ENCODE measurements at regions of chr5 and their contacts with region 1.

Region 1: DNA sequence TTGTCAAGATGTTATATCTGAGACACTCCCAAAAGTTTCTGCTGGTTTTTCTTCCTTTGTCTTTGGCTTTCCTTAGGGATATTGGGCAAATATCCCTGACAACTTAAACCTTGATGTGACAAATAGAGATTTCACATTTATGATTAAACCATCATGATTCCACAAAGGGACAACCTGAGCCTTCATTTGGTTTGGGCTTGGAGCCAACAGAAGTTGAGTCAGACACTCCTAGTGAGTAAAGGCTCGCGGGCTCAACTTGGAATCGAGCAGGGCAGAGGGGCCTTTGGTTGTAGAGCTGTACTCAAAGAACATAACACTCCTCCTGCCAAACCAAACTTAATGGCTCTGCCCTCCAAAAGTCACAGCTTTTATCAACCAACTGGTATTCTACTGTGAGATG is 290.3 kb upstream of the MAP3K1 start:
- DNase-seq: peak; percentile 81
- H3K4me3 ChIP-seq: no peak overlapping the region
- H3K27ac ChIP-seq: no peak overlapping the region
- H3K4me1 ChIP-seq: peaks cover 43% of the 10 kb centered on the region
- H3K27me3 ChIP-seq: no peaks in the 10 kb centered on the region
- CTCF ChIP-seq: no peak

Region 2: DNA sequence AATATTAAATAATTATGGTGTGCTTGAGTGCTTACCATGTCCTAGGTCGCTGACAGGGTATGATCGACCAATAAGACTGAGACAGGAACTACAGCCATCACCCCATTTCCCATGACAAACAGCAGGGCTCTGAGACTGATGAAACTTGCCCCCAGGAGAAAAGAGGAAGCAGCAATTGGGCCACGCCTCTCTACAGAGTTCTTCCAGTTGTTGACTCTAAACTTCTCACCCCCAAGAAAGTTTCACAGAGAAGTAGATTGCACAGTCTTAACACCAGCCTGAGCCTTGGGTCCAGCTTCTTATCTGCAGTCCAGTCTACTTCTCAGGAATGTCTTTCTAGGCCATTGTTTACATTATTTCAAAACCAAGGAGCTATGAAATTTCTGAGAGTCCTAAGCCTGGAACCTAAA is 109.7 kb before region 1 on chr5:
- CTCF ChIA-PET with region 1: no interaction called
- dilution Hi-C with region 1: no loop called
- in situ Hi-C with region 1: no loop called
- intact Hi-C with region 1: no loop called
- DNase-seq: no peak
- H3K4me3 ChIP-seq: no peak overlapping the region
- H3K27ac ChIP-seq: no peak overlapping the region
- H3K4me1 ChIP-seq: peaks cover 5% of the 10 kb centered on the region
- H3K27me3 ChIP-seq: no peaks in the 10 kb centered on the region
- CTCF ChIP-seq: no peak

Region 3: GRCh38 chr5:56543441-56544390 is 18.6 kb after region 1 on chr5:
- CTCF ChIA-PET with region 1: no interaction called
- dilution Hi-C with region 1: no loop called
- in situ Hi-C with region 1: no loop called
- intact Hi-C with region 1: loop called (anchors 1 kb)
- DNase-seq: peak; percentile 87
- H3K4me3 ChIP-seq: no peak overlapping the region
- H3K27ac ChIP-seq: peak overlapping the region; percentile 82
- H3K4me1 ChIP-seq: peaks cover 18% of the 10 kb centered on the region
- H3K27me3 ChIP-seq: no peaks in the 10 kb centered on the region
- CTCF ChIP-seq: no peak

Measured in mammary epithelial cell (primary cell).